Mammary epithelial cell (primary cell): ENCODE measurements at regions of chr18 and their contacts with region 1.

Region 1: DNA sequence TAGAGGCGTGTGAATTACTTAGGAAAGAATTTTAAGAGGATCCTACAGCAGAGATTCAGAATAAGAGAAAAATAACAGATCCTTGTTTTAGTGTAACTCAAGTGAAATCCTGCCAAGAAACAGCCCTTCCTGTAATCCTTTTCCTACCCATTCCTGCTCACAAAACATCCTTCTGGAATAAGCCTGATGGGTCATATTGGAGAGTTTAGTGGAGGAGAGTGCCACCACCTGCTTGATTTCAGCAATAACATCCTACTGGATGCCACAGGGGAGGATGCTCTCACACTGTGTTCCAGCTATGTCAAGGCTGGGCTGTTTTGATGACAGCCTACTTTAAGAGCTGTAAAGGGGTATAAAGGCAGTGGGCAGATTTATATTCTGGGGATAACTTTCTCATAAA is 54.8 kb upstream of the CCDC178 start:
- DNase-seq: peak; percentile 17
- H3K4me3 ChIP-seq: no peak overlapping the region
- H3K27ac ChIP-seq: no peak overlapping the region
- H3K4me1 ChIP-seq: no peaks in the 10 kb centered on the region
- H3K27me3 ChIP-seq: peaks cover 5% of the 10 kb centered on the region
- CTCF ChIP-seq: peak; percentile 43 to 72

Region 2: DNA sequence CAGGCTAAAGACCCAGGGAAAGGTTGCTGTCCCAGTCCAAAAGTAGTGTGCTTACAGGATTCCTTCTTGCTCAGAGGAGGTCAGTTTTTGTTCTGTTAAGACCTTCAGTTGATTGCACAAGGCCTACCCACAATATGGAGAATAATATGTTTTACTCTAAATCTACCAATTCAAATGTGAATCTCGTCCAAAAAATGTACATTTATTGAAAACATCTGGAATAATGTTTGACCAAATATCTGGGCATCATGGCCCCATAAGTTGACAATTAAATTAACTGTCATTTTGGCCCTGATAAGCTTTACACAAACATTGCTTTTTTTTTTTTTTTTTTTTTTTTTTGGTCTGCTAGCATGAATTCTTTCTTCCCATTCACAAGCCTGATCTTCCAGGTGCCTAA is 164.6 kb before region 1 on chr18:
- CTCF ChIA-PET with region 1: no interaction called
- dilution Hi-C with region 1: no loop called
- in situ Hi-C with region 1: no loop called
- intact Hi-C with region 1: loop called (anchors 5 kb)
- DNase-seq: no peak
- H3K4me3 ChIP-seq: no peak overlapping the region
- H3K27ac ChIP-seq: no peak overlapping the region
- H3K4me1 ChIP-seq: no peaks in the 10 kb centered on the region
- H3K27me3 ChIP-seq: no peaks in the 10 kb centered on the region
- CTCF ChIP-seq: no peak